MCF 10A (cell line): ENCODE measurements at regions of chr12 and their contacts with region 1.

Region 1: DNA sequence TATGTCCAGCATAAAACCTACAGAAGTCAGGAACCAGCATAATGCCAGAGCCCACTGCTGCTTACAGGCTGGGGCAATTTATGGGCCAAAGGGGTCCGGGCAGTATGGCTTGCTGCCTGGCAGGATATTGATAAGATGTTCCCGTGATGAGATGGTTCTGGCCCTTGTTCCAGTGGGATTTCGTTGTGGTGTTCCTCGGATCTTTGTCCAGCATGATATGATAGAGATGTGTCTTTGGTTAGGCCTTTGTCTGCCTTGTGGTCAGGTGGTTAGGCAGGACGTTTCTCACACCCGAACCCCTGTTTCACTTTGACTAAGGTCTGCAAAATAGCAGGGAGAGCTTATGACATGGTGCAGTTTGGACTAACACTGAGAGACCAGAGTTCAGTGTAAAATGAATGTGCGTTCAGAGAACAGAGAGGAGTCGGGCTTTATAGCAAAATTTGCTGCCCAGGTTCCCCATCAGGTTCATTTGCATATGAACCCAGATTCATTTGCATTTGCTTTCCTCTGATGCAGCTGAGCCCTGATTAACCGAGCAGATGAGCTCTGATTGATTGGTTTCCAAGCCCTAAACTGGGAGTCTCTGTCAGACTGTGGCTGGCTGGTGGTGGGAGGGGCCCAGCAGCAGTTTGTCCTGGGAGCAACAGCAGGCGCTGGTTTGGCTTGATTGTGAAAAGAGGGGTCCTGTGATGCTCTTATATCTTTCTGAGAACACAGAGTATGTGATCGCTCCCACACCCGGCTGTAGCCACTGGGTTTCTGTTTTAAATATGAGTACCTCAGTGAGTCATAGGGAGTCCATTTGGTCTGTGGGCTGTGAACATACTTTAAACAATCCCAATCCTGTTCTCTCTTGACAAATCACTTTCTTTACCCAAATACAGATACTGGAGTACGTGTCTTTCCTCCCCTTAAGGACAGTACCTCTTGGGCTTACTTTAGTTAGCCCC is 156.3 kb upstream of the PZP start:
- DNase-seq: peak; percentile 59
- H3K4me3 Mint-ChIP-seq: peak overlapping the region; percentile 58
- H3K27ac Mint-ChIP-seq: peak overlapping the region; percentile 70
- H3K4me1 Mint-ChIP-seq: peaks cover 26% of the 10 kb centered on the region
- H3K27me3 Mint-ChIP-seq: no peaks in the 10 kb centered on the region
- CTCF ChIP-seq: no peak

Region 2: GRCh38 chr12:9184276-9184675 is 180.2 kb before region 1 on chr12:
- CTCF ChIA-PET with region 1: no interaction called
- POLR2A ChIA-PET with region 1: no interaction called
- intact Hi-C with region 1: no loop called
- DNase-seq: no peak
- H3K4me3 Mint-ChIP-seq: no peak overlapping the region
- H3K27ac Mint-ChIP-seq: no peak overlapping the region
- H3K4me1 Mint-ChIP-seq: no peaks in the 10 kb centered on the region
- H3K27me3 Mint-ChIP-seq: no peaks in the 10 kb centered on the region
- CTCF ChIP-seq: no peak

Region 3: GRCh38 chr12:9340422-9341259 is 23.9 kb before region 1 on chr12:
- CTCF ChIA-PET with region 1: interaction called, 3 read pairs
- POLR2A ChIA-PET with region 1: no interaction called
- intact Hi-C with region 1: loop called (anchors 2 kb)
- DNase-seq: peak; percentile 12
- H3K4me3 Mint-ChIP-seq: no peak overlapping the region
- H3K27ac Mint-ChIP-seq: no peak overlapping the region
- H3K4me1 Mint-ChIP-seq: no peaks in the 10 kb centered on the region
- H3K27me3 Mint-ChIP-seq: no peaks in the 10 kb centered on the region
- CTCF ChIP-seq: no peak

Region 4: GRCh38 chr12:9378430-9378835 is 13.9 kb after region 1 on chr12:
- CTCF ChIA-PET with region 1: interaction called, 30 read pairs
- POLR2A ChIA-PET with region 1: interaction called, 5 read pairs
- intact Hi-C with region 1: no loop called
- DNase-seq: peak; percentile 45
- H3K4me3 Mint-ChIP-seq: no peak overlapping the region
- H3K27ac Mint-ChIP-seq: no peak overlapping the region
- H3K4me1 Mint-ChIP-seq: no peaks in the 10 kb centered on the region
- H3K27me3 Mint-ChIP-seq: no peaks in the 10 kb centered on the region
- CTCF ChIP-seq: peak; percentile 44